ENCODE measurements at regions of chrX and their contacts with region 1.

Region 1: GRCh38 chrX:123764967-123765871 is 32.4 kb upstream of the THOC2 start:
- DNase-seq: peak; percentile 83
- ATAC-seq: peak; percentile 100
- H3K4me3 ChIP-seq: peak overlapping the region; percentile 63
- H3K27ac ChIP-seq: 0 out of 2 replicates have a peak overlapping the region, but pooled peaks have one; percentile 19
- H3K4me1 ChIP-seq: 0 out of 2 replicates have a peak, but pooled peaks cover 5% of the 10 kb centered on the region
- H3K27me3 ChIP-seq: no peaks in the 10 kb centered on the region
- CTCF ChIP-seq: no peak

Region 2: GRCh38 chrX:122591546-122591945 is 1173.7 kb before region 1 on chrX:
- CTCF ChIA-PET with region 1: no interaction called
- POLR2A ChIA-PET with region 1: no interaction called
- intact Hi-C with region 1: no loop called
- DNase-seq: no peak
- ATAC-seq: no peak
- H3K4me3 ChIP-seq: no peak overlapping the region
- H3K27ac ChIP-seq: no peak overlapping the region
- H3K4me1 ChIP-seq: no peaks in the 10 kb centered on the region
- H3K27me3 ChIP-seq: no peaks in the 10 kb centered on the region
- CTCF ChIP-seq: no peak

Region 3: DNA sequence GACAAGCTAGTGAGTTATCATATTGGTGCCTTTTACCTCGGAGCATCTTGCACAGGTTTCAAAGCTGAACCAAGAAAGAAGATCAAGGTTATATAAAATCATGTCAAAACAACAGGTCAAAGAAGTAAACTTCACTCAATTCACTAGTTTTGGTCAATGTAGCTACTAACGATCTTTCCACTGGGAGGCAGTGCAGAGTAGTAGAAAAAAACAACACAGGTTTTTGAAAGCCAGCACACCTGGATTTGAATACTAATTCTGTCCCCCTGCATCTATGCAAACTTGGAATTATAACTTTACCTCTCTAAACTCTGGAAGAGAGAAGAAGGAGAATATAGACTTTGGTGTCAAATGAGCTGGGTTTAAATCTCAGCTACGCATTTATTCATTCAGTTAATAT is 315.0 kb before region 1 on chrX:
- CTCF ChIA-PET with region 1: no interaction called
- POLR2A ChIA-PET with region 1: no interaction called
- intact Hi-C with region 1: loop called (anchors 1 kb)
- DNase-seq: peak; percentile 50
- ATAC-seq: peak; percentile 33; the same call in 1 of the 2 replicates
- H3K4me3 ChIP-seq: no peak overlapping the region
- H3K27ac ChIP-seq: no peak overlapping the region
- H3K4me1 ChIP-seq: no peaks in the 10 kb centered on the region
- H3K27me3 ChIP-seq: no peaks in the 10 kb centered on the region
- CTCF ChIP-seq: peak; percentile 71

Region 4: DNA sequence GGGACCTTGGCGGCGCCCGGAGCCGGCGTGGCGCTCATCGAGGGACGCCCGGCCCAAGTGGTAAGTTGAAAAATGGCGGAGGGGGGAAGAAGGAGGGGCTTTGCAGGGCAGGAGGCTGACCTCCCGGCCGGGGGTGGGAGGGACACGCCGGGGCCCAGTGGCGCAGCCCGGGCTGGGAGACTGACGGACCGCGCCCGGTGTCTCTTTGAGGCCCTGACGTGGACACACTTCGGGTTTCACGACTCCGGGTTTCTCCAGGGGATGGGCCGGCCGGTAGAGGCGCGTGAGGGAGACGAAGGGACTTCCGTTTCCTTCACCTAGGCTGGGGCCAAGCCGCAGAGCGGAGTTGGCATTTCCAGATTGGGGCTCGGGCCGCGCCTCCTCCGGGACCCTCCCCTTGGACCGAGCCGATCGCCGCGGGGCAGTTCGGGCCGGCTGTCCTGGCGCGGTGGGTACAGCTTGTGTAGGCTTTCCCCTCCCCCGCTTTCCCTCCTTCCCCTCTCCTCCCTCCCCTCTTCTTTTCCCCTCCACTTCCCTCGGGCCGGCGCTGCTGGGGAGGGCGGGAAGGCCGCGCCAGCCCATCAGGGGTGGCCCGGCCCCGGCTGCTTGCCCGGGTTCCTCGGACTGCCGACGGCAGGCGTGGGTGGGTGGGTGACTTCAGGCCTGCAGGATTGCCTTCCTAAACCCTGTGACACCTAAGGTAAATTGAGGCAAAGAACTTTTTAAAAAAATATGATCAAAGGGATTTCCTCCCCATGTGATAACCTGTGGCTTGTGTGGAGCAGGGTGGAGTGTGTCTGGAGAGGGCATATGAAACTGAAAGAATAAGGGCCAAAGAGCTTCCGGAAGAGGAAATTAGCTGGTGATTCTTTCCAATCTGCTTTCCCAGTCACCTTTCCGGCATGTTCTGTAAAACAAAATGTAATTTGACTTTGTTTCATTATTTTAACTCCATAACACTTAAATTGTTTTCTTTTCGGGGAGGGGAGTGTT is 94.9 kb after region 1 on chrX and contains the start of gene XIAP:
- CTCF ChIA-PET with region 1: no interaction called
- POLR2A ChIA-PET with region 1: no interaction called
- intact Hi-C with region 1: no loop called
- DNase-seq: peak; percentile 82
- ATAC-seq: peak; percentile 86
- H3K4me3 ChIP-seq: peak within 1 kb of the TSS; percentile 90
- H3K27ac ChIP-seq: peak within 1 kb of the TSS; percentile 91
- H3K4me1 ChIP-seq: peaks cover 11% of the 10 kb centered on the region
- H3K27me3 ChIP-seq: no peaks in the 10 kb centered on the region
- CTCF ChIP-seq: no peak
- total RNA-seq, gene XIAP: 29.2 and 35.8 TPM in 2 replicates

Measured in PC-3 (cell line).